ENCODE measurements at regions of chr10 and their contacts with region 1.

Region 1: DNA sequence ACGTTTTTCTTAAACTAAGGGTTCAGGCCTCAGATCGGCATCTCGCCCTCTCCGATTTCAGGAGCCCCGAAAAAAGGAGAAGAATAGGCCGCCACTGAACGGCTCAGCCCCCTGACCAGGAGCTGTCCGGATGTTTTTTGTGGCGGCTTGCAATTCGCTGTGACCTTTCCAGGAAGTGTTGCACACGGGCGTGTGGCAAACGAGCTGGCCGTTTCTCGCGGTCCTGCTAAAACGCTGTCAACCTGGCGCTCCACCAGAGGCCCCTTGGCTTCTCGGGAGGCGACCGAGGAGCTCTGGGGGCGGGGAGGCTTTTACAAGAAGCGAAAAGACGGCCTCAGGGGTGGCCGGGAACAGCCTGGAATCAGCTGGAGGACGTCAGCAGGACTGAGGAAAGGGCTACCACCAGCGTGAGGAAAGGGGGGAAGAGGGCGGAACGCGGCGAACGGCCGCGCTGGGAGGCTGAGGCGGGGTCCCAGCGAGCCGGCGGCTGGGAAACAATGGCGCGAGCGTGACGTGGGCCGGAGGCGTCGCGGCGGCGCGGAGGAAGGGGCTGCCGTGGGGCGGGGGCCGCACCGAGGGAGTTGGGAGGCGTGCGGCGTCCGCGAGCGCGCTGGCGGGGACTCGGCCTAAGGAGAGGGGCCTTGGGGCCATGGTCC is 493 bp downstream of the NT5C2 start:
- DNase-seq: peak; percentile 83 to 90 (median 88)
- ATAC-seq: peak; percentile 60 to 77 (median 76)
- H3K4me3 ChIP-seq: peak overlapping the region; percentile 65 to 94 (median 86)
- H3K27ac ChIP-seq: peak overlapping the region; percentile 92 to 100 (median 98)
- H3K4me1 ChIP-seq: peaks cover 4 to 71% (median 53%) of the 10 kb centered on the region in 12 donors
- H3K27me3 ChIP-seq: no peaks in the 10 kb centered on the region
- CTCF ChIP-seq: no peak
- POLR2A ChIP-seq: no peak

Region 2: DNA sequence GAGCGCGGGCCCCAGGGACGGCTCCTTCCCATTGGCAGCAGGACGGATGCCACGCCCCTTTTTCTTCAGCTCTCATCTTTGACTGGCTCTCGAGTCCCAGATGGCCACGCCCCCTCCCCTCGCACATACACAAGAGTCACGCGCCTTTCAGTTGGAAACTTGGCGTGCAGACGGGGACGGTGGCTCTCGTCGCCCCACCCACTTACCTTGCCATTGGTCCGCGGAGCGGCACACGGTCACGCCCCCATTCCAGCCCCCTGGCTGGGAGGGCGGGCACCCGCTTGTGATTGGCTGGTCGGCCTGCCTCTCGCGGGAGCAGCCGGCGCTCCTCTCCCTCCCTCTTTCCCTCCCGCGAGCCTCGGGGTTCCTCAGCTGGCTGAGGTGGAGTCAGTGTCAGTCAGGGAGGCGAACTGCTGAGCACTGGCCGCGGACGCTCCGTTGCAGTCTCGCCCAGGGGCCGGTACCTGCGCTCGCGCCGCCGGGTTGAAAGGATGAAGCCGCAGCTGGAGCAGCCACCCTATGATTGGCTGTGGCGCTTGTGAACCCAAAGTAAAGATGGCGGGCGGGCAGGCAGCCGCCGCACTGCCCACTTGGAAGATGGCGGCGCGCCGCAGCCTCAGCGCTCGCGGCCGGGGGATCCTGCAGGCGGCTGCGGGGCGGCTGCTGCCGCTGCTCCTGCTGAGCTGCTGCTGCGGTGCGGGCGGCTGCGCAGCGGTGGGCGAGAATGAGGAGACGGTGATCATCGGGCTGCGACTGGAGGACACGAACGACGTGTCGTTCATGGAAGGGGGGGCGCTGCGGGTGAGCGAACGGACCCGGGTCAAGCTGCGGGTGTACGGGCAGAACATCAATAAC is 274.4 kb before region 1 on chr10 and contains the start of gene CNNM2:
- intact Hi-C with region 1: loop called in 1 of 10 experiments (anchors 2 kb)
- DNase-seq: peak; percentile 100
- ATAC-seq: peak; percentile 96 to 99 (median 98)
- H3K4me3 ChIP-seq: peak within 1 kb of the TSS; percentile 51 to 95 (median 86)
- H3K27ac ChIP-seq: peak within 1 kb of the TSS; percentile 26 to 91 (median 84)
- H3K4me1 ChIP-seq: peaks cover 0 to 45% (median 32%) of the 10 kb centered on the region in 12 donors
- H3K27me3 ChIP-seq: no peaks in the 10 kb centered on the region
- CTCF ChIP-seq: peak in 1 of 12 donors; percentile 11
- POLR2A ChIP-seq: peak in 1 of 2 donors; percentile 67
- total RNA-seq, gene CNNM2: 2.9 to 6.3 (median 4.1) TPM

Region 3: DNA sequence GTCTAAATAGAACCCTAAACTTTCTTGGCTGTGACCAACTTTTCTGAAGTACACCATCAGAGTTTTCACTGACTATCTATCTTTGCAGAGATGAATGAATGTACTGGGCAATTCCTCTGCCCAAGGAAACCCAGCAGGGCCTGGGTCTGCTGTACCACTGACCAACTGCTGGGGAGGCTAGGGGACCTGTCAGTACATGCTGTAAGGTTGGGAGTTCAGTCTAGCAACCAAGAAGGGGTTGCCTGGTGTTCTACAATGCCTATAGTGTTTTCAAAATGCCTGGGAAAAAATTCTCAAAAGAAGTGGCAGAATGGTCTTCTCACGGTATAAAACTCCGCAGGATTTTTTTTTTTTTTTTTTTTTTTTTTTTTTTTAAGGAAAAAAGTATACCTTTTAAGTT is 105.8 kb before region 1 on chr10:
- intact Hi-C with region 1: no loop called
- DNase-seq: no peak
- ATAC-seq: no peak
- H3K4me3 ChIP-seq: no peak overlapping the region
- H3K27ac ChIP-seq: no peak overlapping the region
- H3K4me1 ChIP-seq: no peaks in the 10 kb centered on the region
- H3K27me3 ChIP-seq: no peaks in the 10 kb centered on the region
- CTCF ChIP-seq: no peak
- POLR2A ChIP-seq: no peak

Region 4: DNA sequence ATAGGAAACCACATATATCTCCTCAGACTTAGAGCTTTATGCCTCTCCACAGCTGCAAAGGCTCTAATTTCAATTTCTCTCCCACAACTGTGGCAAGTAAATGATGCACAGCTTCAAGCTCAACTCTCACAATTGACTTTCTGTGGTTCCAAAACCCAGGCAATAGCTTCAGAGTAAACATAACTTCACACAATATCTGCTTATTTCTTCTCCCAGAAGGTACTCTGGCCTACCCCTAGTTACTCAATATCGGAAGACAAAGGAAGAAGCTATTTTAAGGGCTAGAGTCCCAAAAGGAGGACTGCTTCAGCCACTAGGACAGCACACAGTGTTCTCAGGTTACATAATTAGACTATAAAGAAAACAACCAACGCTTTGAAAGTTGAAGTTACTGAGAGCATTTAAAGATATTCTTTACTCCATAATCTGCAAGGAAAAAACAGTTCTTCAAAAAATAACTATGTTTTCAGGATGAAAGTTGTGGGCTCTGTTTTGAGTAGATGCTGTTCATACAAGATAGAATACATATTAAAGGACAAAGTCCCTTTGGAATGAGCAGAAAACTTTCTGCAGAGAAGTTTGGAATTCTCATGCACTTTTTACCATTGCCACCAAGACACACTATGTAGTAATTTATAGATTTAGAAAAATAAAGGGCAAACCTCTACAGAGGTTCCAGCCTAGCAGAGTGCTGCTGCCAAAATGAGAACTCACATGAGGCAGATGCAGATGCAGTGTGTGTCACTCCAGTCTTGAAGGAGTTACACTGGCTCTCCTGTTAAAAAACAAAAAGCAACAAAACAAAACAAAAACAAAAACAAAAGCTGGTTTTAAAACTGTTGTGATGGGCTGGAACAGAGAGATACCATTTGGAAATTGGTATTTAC is 81.3 kb before region 1 on chr10:
- intact Hi-C with region 1: loop called in 1 of 10 experiments (anchors 5 kb)
- DNase-seq: no peak
- ATAC-seq: peak; percentile 85 to 94 (median 86)
- H3K4me3 ChIP-seq: peak overlapping the region in 4 of 12 donors; percentile 6 to 27 (median 9)
- H3K27ac ChIP-seq: peak overlapping the region; percentile 17 to 83 (median 60)
- H3K4me1 ChIP-seq: peaks cover 8 to 61% (median 34%) of the 10 kb centered on the region in 12 donors
- H3K27me3 ChIP-seq: no peaks in the 10 kb centered on the region
- CTCF ChIP-seq: peak in 1 of 12 donors; percentile 16
- POLR2A ChIP-seq: no peak

Region 5: DNA sequence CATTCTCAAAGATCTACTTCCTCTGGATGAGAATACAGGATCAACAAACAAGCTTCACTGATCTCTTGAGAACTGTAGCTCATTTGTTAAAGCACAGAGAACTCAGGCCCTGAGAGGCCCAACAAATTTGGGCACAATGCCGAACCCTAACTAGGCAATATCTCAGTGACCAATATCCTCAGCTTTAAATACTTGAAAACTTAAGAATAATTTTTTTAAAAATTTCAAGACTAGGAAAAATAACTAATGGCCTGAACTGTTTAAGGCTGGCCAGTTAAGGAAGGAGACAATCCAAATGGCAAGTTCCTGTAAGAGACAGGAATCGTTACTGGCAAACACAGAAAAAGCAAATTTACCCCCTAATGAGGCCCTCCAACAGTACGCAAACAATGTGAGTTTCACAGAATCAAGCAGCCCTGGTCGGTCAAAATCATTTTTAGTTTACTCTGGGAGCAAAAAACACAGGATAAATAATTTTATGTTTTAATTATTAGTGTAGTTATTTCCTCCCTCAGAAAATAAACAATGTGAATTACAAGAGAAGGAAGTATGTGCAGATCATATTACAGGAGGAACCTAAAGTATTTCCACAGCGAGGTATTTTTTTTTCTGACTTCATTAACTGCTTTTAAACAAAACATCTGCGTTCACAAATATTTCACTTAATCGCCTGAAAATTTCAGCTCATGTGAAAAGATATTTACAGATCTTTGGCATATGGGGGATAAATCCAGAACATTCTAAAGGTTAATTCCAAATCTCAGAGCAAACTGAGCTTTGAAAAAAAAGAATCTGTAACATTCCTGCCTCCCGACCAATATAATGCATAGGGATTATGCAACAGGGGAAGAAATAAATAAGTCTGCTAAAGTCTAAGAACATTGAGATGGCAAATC is 39.0 kb before region 1 on chr10:
- intact Hi-C with region 1: loop called in 7 of 10 experiments (anchors 2 to 10 kb)
- DNase-seq: peak in 1 of 5 donors; percentile 20
- ATAC-seq: peak in 2 of 4 donors; percentile 57 to 59
- H3K4me3 ChIP-seq: peak overlapping the region in 9 of 12 donors; percentile 16 to 46 (median 40)
- H3K27ac ChIP-seq: peak overlapping the region; percentile 64 to 87 (median 77)
- H3K4me1 ChIP-seq: peaks cover 0 to 67% (median 50%) of the 10 kb centered on the region in 12 donors
- H3K27me3 ChIP-seq: no peaks in the 10 kb centered on the region
- CTCF ChIP-seq: no peak
- POLR2A ChIP-seq: no peak

Region 6: GRCh38 chr10:103231047-103231551 is 38.5 kb after region 1 on chr10:
- intact Hi-C with region 1: loop called in 8 of 10 experiments (anchors 2 to 10 kb)
- DNase-seq: peak in 1 of 5 donors; percentile 26
- ATAC-seq: peak; percentile 38 to 59 (median 52)
- H3K4me3 ChIP-seq: no peak overlapping the region
- H3K27ac ChIP-seq: peak overlapping the region; percentile 68 to 95 (median 83)
- H3K4me1 ChIP-seq: peaks cover 0 to 42% (median 19%) of the 10 kb centered on the region in 12 donors
- H3K27me3 ChIP-seq: no peaks in the 10 kb centered on the region
- CTCF ChIP-seq: no peak
- POLR2A ChIP-seq: no peak

Region 7: DNA sequence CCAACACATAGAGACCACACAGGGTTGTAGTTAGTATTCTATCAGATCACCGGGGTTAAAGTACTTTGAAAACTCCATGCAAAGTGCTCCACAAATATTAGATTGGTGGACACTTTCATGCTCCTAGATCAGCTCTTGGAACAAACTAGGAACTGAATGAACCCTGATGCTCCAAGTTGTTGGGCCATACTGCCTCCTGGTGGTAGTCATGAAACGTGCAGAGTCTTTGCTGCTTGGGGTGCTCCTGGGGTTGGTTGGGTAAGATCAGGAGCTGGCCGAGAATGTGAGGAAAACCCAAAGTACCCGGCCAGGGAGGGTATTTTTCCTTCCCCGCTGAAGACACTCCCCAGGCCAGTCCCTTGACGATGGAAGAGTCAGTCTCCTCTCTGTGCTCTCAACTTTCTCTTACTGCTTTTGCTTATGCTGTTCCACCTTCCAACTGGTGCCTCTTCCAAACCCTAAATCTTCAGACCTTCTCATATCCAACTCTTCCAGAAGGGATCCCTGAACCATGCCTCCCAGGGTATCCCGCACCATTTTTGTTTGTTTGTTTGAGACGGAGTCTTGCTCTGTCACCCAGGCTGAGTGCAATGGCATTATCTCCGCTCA is 52.2 kb after region 1 on chr10:
- intact Hi-C with region 1: loop called in 6 of 10 experiments (anchors 5 to 10 kb)
- DNase-seq: peak in 4 of 5 donors; percentile 67 to 73 (median 71)
- ATAC-seq: peak; percentile 76 to 93 (median 88)
- H3K4me3 ChIP-seq: no peak overlapping the region
- H3K27ac ChIP-seq: no peak overlapping the region
- H3K4me1 ChIP-seq: peaks cover 0 to 25% (median 5%) of the 10 kb centered on the region in 12 donors
- H3K27me3 ChIP-seq: no peaks in the 10 kb centered on the region
- CTCF ChIP-seq: peak; percentile 79 to 92 (median 86)
- POLR2A ChIP-seq: no peak

Region 8: GRCh38 chr10:103265717-103266329 is 73.2 kb after region 1 on chr10:
- intact Hi-C with region 1: no loop called
- DNase-seq: peak in 4 of 5 donors; percentile 53 to 67 (median 62)
- ATAC-seq: peak in 2 of 4 donors; percentile 45 to 53
- H3K4me3 ChIP-seq: no peak overlapping the region
- H3K27ac ChIP-seq: no peak overlapping the region
- H3K4me1 ChIP-seq: no peaks in the 10 kb centered on the region
- H3K27me3 ChIP-seq: peaks cover 0 to 39% (median 6%) of the 10 kb centered on the region in 9 donors
- CTCF ChIP-seq: no peak
- POLR2A ChIP-seq: no peak

Measured in heart left ventricle (tissue), 16 donors.